ENCODE measurements at regions of chr16 and their contacts with region 1.

Region 1: GRCh38 chr16:19717771-19718602 is at the starts of genes IQCK and KNOP1:
- DNase-seq: peak; percentile 74 to 91
- H3K4me3 ChIP-seq: peak within 1 kb of the TSS; percentile 97
- H3K27ac ChIP-seq: peak within 1 kb of the TSS; percentile 55
- H3K4me1 ChIP-seq: peaks cover 25% of the 10 kb centered on the region
- H3K27me3 ChIP-seq: no peaks in the 10 kb centered on the region
- CTCF ChIP-seq: no peak
- total RNA-seq, gene IQCK: 21.0 and 21.6 TPM in 2 replicates
- total RNA-seq, gene KNOP1: 60.4 TPM in 2 replicates

Region 2: DNA sequence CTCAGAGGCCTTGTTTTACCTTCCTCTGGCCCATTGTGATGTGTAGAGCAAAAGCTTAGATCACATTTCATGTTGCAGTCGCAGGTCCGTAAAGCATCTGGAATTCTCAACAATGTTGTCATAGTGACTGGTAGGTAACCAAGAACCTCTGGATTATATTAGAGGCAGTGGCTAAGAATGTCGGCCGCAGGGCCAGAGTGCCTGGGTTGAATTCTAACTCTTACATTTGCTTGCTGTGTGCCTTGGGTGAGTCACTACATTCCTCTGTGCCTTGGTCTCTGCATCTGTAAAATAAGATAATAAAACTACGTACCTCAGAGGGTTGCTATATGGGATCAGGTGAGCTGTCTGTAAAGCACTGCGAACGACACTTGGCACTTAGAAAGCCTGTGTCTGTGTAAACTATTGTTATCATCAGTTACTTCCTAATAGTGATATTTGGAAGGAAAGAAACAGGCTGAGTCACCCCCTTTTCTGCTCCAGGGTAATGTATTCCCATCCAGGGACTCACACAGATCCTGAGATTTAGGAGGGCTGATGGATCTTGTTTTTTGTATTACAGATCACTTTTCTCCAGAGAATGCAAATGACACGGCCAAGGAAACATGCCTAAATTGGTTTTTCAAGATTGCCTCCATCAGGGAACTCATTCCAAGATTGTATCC is 110.2 kb before region 1 on chr16:
- CTCF ChIA-PET with region 1: interaction called, 3 read pairs
- POLR2A ChIA-PET with region 1: no interaction called
- intact Hi-C with region 1: loop called (anchors 1 kb)
- DNase-seq: peak; percentile 73 to 85
- H3K4me3 ChIP-seq: no peak overlapping the region
- H3K27ac ChIP-seq: peak overlapping the region; percentile 38; the same call in 1 of the 2 replicates
- H3K4me1 ChIP-seq: peaks cover 52% of the 10 kb centered on the region
- H3K27me3 ChIP-seq: no peaks in the 10 kb centered on the region
- CTCF ChIP-seq: no peak

Region 3: GRCh38 chr16:19696328-19696727 is 21.7 kb before region 1 on chr16:
- CTCF ChIA-PET with region 1: no interaction called
- POLR2A ChIA-PET with region 1: interaction called, 14 read pairs
- intact Hi-C with region 1: loop called (anchors 1 kb)
- DNase-seq: peak; percentile 56 to 80
- H3K4me3 ChIP-seq: no peak overlapping the region
- H3K27ac ChIP-seq: no peak overlapping the region
- H3K4me1 ChIP-seq: peaks cover 22% of the 10 kb centered on the region
- H3K27me3 ChIP-seq: no peaks in the 10 kb centered on the region
- CTCF ChIP-seq: no peak

Region 4: DNA sequence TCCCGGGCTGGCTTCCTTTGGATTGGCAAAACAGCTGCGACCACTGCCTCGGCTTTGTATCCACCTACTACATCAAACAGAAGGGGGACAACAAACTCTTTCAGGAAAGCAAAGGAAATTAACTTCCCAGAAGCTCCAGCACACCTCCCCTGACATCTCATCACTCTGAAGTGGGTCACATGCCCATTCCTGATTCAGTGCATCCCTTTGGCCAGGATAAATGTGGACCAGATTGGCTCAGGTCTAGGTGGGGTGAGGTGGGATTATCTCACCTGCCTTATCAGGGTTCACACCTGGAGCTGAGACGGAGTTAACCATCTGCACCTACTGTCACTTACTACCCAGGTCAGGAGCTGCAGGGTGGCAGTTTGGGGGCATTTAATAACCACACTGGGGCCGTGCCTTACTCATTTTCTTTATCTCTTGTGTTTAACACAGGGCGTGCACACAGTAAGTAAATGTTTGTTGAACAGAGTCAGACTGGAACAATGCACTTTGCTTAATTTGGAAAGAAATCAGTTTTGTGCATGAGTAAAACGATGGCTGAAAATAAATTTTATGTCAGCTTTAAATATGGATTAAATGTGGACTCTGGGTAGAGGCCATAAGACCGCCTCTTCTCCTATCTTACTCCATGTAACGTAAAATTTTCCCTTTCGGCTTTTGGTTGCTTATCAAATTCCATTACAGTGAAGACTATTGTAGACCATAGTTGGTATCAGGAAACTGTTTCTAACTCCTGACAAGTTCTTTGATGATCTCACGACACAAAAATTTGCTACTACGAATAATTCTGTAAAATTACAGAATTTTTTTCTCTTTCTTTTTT is 36.0 kb after region 1 on chr16:
- CTCF ChIA-PET with region 1: no interaction called
- POLR2A ChIA-PET with region 1: interaction called, 7 read pairs
- intact Hi-C with region 1: loop called (anchors 1 kb)
- DNase-seq: peak; percentile 49 to 91
- H3K4me3 ChIP-seq: no peak overlapping the region; the same call in 1 of the 2 replicates
- H3K27ac ChIP-seq: peak overlapping the region; percentile 93
- H3K4me1 ChIP-seq: peaks cover 58% of the 10 kb centered on the region
- H3K27me3 ChIP-seq: no peaks in the 10 kb centered on the region
- CTCF ChIP-seq: no peak

Region 5: GRCh38 chr16:19810817-19811731 is 93.1 kb after region 1 on chr16:
- CTCF ChIA-PET with region 1: no interaction called
- POLR2A ChIA-PET with region 1: no interaction called
- intact Hi-C with region 1: loop called (anchors 10 kb)
- DNase-seq: peak; percentile 52 to 92
- H3K4me3 ChIP-seq: peak overlapping the region; percentile 6; the same call in 1 of the 2 replicates
- H3K27ac ChIP-seq: peak overlapping the region; percentile 80
- H3K4me1 ChIP-seq: peaks cover 50% of the 10 kb centered on the region
- H3K27me3 ChIP-seq: no peaks in the 10 kb centered on the region
- CTCF ChIP-seq: no peak

Region 6: DNA sequence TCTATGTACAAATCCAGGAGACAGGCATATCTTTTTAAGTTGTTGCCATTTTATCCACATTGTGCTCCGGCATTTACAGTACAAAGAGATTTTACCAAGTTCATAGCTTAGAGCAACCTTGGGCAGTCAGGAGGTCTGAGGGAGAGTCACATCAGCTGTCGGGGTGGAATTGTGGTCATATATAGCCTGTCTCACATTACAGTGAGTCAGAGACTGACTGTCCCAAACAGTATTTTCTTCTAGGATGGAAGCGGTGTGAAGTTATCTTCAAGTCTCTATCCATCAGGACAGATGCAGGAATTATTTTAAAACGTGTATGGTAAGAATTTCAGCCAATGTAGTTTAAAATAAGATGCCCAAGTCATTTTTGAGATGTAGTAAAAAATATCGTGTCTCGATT is 113.7 kb after region 1 on chr16:
- CTCF ChIA-PET with region 1: interaction called, 5 read pairs
- POLR2A ChIA-PET with region 1: no interaction called
- intact Hi-C with region 1: loop called (anchors 5 kb)
- DNase-seq: peak; percentile 41 to 58
- H3K4me3 ChIP-seq: no peak overlapping the region
- H3K27ac ChIP-seq: no peak overlapping the region
- H3K4me1 ChIP-seq: peaks cover 14% of the 10 kb centered on the region
- H3K27me3 ChIP-seq: no peaks in the 10 kb centered on the region
- CTCF ChIP-seq: no peak